A549 (cell line): ENCODE measurements at regions of chr10 and their contacts with region 1.

Region 1: DNA sequence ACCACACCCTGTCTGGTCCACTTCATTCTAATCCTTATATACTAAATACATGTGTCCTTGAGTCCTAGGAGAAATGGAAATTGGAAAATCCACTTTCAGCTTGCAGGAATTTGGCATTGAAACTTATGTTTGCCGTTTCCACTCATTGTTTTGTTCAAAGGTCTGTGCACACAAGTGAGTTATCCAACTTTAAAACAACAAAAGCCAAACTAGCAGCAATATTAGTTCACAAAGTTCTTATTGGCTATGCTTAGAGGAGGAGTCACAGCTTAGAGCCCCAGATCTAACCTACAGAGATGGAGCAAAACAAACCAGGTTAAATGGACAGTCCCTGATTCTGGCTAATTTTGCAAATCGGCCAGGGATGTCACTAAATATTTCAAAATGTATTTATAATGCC is 44.6 kb upstream of the AFAP1L2 start:
- DNase-seq: no peak
- ATAC-seq: no peak
- H3K4me3 ChIP-seq: no peak overlapping the region
- H3K27ac ChIP-seq: no peak overlapping the region
- H3K4me1 ChIP-seq: no peaks in the 10 kb centered on the region
- CTCF ChIP-seq: no peak
- EP300 ChIP-seq: no peak
- POLR2A ChIP-seq: no peak
- RAD21 ChIP-seq: no peak

Region 2: GRCh38 chr10:114121031-114121430 is 327.9 kb before region 1 on chr10:
- CTCF ChIA-PET with region 1: no interaction called
- POLR2A ChIA-PET with region 1: no interaction called
- DNase-seq: no peak
- ATAC-seq: no peak
- H3K4me3 ChIP-seq: no peak overlapping the region
- H3K27ac ChIP-seq: no peak overlapping the region
- H3K4me1 ChIP-seq: no peaks in the 10 kb centered on the region
- CTCF ChIP-seq: no peak
- EP300 ChIP-seq: no peak
- POLR2A ChIP-seq: no peak
- RAD21 ChIP-seq: peak in 1 of 2 experiments; percentile 11; a peak in 1 of 5 replicates

Region 3: GRCh38 chr10:114437456-114438292 is 11.2 kb before region 1 on chr10:
- CTCF ChIA-PET with region 1: interaction called, 13 read pairs
- POLR2A ChIA-PET with region 1: no interaction called
- DNase-seq: peak; percentile 41 to 64
- ATAC-seq: peak; percentile 75 to 85; a peak in 5 of 6 replicates
- H3K4me3 ChIP-seq: no peak overlapping the region
- H3K27ac ChIP-seq: no peak overlapping the region
- H3K4me1 ChIP-seq: no peaks in the 10 kb centered on the region
- CTCF ChIP-seq: peak; percentile 66
- EP300 ChIP-seq: no peak
- POLR2A ChIP-seq: no peak
- RAD21 ChIP-seq: peak; percentile 70 to 72